ENCODE measurements at regions of chr1 and their contacts with region 1.

Region 1: DNA sequence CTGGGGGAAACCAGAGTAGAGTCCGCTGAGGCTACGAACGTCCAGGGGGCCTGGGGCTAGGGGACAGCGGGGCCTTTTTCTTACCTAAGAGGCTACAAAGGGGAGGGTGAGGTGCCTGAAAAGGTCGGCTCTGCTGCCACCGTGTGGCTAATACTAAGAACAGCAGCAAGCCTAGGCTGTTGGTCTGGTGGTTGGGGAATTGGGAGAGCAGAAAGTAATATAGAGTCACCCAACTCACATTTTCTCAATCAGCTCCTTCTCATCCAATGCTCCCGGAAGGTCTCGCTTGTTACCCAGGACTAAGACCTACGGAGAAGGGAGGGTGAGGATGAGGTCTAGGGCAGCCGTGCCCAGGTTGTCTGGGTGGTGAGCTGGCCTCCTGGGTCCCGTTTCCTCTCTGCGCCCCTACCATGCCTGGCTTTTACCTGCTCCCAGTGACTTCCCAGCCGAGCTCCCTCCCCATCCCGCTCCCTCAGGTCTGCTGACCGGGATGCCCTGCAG is 9.3 kb downstream of the ARL8A start:
- DNase-seq: peak; percentile 93
- H3K4me3 ChIP-seq: no peak overlapping the region; a peak in 1 of 4 replicates
- H3K27ac ChIP-seq: no peak overlapping the region
- H3K4me1 ChIP-seq: peaks cover 0 to 4% of the 10 kb centered on the region in 2 experiments; a peak in 1 of 4 replicates
- H3K27me3 ChIP-seq: no peaks in the 10 kb centered on the region
- CTCF ChIP-seq: peak; percentile 81
- EP300 ChIP-seq: no peak
- RAD21 ChIP-seq: peak; percentile 76

Region 2: DNA sequence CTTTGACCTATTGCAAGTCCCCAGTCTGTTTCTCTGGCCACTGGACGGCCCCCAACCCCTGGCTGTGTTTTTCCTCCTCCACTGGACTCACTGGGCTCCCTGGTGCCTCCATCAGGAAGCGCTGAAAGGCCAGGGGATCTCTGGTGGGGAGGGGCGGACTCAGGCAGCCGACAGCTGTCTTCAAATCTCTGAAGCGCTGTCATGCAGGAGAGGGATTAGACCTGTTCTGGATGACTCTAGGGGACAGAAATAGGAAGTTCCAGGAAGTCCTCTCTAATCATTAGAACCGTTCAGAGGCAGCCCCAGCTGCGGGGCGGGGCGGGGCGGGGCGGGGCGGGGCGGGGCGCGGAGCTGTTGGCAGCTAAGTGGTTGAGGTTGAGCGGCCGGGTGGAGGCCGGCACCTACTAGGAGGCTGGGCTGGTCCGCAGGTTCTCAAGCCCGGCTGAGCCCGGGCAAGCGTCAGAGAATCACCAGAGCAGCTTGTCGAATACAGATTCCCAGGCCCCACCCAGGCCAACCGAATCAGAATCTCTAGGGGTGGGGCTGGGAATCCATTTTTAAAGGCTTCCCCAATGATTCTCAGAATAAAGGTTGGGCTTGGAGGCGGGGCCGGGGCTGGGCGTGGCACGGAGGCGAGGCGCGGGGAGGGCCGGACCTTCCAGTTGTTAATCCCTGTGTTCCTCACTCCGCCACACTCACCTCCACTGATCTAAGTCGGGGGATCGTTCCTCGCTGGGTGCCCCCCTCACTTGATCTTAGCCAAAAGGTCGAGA is 654.9 kb before region 1 on chr1:
- CTCF ChIA-PET with region 1: no interaction called
- POLR2A ChIA-PET with region 1: no interaction called
- DNase-seq: no peak
- H3K4me3 ChIP-seq: no peak overlapping the region
- H3K27ac ChIP-seq: no peak overlapping the region
- H3K4me1 ChIP-seq: peaks cover 2 to 7% of the 10 kb centered on the region in 2 experiments; a peak in 3 of 4 replicates
- H3K27me3 ChIP-seq: no peaks in the 10 kb centered on the region
- CTCF ChIP-seq: no peak
- EP300 ChIP-seq: no peak
- RAD21 ChIP-seq: no peak

Region 3: GRCh38 chr1:202009326-202010179 is 125.7 kb before region 1 on chr1:
- CTCF ChIA-PET with region 1: interaction called, 80 read pairs
- POLR2A ChIA-PET with region 1: no interaction called
- DNase-seq: peak; percentile 90
- H3K4me3 ChIP-seq: no peak overlapping the region; a peak in 1 of 4 replicates
- H3K27ac ChIP-seq: no peak overlapping the region
- H3K4me1 ChIP-seq: peaks cover 0 to 3% of the 10 kb centered on the region in 2 experiments; a peak in 1 of 4 replicates
- H3K27me3 ChIP-seq: no peaks in the 10 kb centered on the region
- CTCF ChIP-seq: peak; percentile 96
- EP300 ChIP-seq: no peak
- RAD21 ChIP-seq: peak; percentile 90

Region 4: GRCh38 chr1:202056644-202057461 is 78.4 kb before region 1 on chr1:
- CTCF ChIA-PET with region 1: no interaction called
- POLR2A ChIA-PET with region 1: no interaction called
- DNase-seq: no peak
- H3K4me3 ChIP-seq: no peak overlapping the region
- H3K27ac ChIP-seq: no peak overlapping the region
- H3K4me1 ChIP-seq: no peaks in the 10 kb centered on the region; a peak in 1 of 4 replicates
- H3K27me3 ChIP-seq: no peaks in the 10 kb centered on the region; the same call in 1 of the 2 replicates
- CTCF ChIP-seq: no peak
- EP300 ChIP-seq: no peak
- RAD21 ChIP-seq: no peak

Region 5: GRCh38 chr1:202122639-202123335 is 12.5 kb before region 1 on chr1 and contains the start of gene GPR37L1:
- CTCF ChIA-PET with region 1: interaction called, 161 read pairs
- POLR2A ChIA-PET with region 1: interaction called, 3 read pairs
- DNase-seq: peak; percentile 91
- H3K4me3 ChIP-seq: no peak within 1 kb of the TSS
- H3K27ac ChIP-seq: no peak within 1 kb of the TSS
- H3K4me1 ChIP-seq: peaks cover 0 to 9% of the 10 kb centered on the region in 2 experiments; a peak in 1 of 4 replicates
- H3K27me3 ChIP-seq: no peaks in the 10 kb centered on the region
- CTCF ChIP-seq: peak; percentile 51
- EP300 ChIP-seq: no peak
- RAD21 ChIP-seq: peak; percentile 58
- polyA plus RNA-seq, gene GPR37L1: not detected in 2 replicates

Region 6: DNA sequence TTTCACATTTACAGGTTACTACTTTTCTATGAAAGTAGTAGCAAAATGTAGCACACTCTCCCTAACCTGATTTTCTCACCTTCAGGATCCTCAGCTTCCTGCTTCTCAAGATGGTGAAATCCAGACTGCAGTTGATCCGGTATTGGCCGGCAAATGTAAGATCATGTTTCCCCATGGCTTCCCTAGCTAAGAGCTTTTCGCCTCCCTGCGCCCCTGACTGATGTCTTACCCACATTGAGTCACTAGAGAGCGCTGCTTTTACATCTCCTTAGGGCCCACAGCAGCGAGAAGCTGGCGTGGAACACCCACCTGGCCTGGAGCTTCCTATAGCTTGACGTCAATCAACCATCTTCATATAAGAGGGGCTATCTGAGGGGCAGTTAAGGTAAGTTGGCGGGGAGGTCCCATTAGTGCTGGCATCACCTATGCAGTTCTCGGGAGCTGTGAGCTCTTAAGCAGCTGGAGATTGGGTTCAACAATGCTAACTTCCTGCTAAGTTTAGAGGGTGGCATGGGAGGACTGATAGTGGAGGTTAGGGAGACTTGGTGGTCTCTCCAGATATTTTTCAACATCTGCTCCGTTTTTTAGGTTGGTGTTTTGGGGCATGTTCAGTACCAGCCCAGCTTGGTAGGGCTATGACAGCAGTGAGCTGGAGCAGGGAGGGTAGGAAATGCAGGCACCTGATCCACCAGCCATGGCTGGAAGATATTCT is 19.7 kb after region 1 on chr1:
- CTCF ChIA-PET with region 1: interaction called, 20 read pairs
- POLR2A ChIA-PET with region 1: no interaction called
- DNase-seq: peak; percentile 62
- H3K4me3 ChIP-seq: no peak overlapping the region
- H3K27ac ChIP-seq: peak overlapping the region in 1 of 2 experiments; percentile 77; a peak in 2 of 4 replicates
- H3K4me1 ChIP-seq: peaks cover 9 to 25% of the 10 kb centered on the region in 2 experiments; a peak in 1 of 4 replicates
- H3K27me3 ChIP-seq: no peaks in the 10 kb centered on the region
- CTCF ChIP-seq: peak; percentile 56
- EP300 ChIP-seq: no peak
- RAD21 ChIP-seq: peak; percentile 57

Region 7: DNA sequence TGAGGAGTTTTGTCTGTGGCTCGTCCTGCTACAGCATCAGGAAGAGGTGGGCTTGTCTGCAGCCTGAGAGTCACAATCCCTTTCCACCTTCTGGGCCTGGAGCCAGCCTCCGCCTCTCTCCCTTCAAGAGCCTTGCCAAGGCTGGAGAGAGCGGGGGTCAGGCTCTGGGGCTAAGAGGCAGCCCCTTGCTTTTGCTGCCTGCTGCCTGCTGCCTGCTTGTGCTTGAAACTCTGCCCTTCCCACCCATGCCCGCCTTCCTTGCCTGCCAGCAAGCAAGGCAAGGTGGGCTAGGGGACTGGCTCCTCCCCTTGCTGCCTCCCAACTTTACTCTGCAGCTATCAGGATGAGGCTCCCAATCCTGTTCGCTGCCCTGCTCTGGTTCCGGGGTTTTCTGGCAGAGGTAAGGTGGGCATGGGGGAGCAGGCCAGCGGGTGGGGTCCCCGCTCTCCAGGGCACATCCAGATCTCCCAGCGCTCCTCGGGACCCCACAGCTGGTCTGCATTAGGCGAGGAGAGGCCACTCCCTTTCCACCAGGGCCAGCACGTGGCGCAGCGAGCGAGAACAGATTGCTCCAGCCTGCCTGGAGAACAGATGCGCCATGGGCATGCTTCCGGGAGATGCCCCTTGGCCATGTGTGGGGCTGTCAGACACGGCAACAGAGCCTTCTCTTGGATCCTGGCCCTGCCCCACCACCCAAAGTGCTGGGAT is 32.6 kb after region 1 on chr1:
- CTCF ChIA-PET with region 1: interaction called, 11 read pairs
- POLR2A ChIA-PET with region 1: no interaction called
- DNase-seq: peak; percentile 91
- H3K4me3 ChIP-seq: no peak overlapping the region
- H3K27ac ChIP-seq: peak overlapping the region in 1 of 2 experiments; percentile 85; a peak in 2 of 4 replicates
- H3K4me1 ChIP-seq: peaks cover 0 to 58% of the 10 kb centered on the region in 2 experiments; a peak in 1 of 4 replicates
- H3K27me3 ChIP-seq: no peaks in the 10 kb centered on the region
- CTCF ChIP-seq: no peak
- EP300 ChIP-seq: peak in 1 of 2 experiments; percentile 12; a peak in 1 of 4 replicates
- RAD21 ChIP-seq: no peak